Left cardiac atrium (tissue), 4 donors: ENCODE measurements at regions of chr1 and their contacts with region 1.

Region 1: GRCh38 chr1:180964595-180964994 is 51.9 kb downstream of the KIAA1614 start:
- DNase-seq: no peak
- ATAC-seq: no peak

Region 2: GRCh38 chr1:180837020-180837419 is 127.6 kb before region 1 on chr1:
- intact Hi-C with region 1: no loop called
- DNase-seq: no peak
- ATAC-seq: no peak

Region 3: GRCh38 chr1:180947901-180948640 is 16.5 kb before region 1 on chr1:
- intact Hi-C with region 1: loop called in 1 of 2 experiments (anchors 2 kb)
- DNase-seq: no peak
- ATAC-seq: no peak